Transverse colon (tissue), 4 donors: ENCODE measurements at regions of chr4 and their contacts with region 1.

Region 1: DNA sequence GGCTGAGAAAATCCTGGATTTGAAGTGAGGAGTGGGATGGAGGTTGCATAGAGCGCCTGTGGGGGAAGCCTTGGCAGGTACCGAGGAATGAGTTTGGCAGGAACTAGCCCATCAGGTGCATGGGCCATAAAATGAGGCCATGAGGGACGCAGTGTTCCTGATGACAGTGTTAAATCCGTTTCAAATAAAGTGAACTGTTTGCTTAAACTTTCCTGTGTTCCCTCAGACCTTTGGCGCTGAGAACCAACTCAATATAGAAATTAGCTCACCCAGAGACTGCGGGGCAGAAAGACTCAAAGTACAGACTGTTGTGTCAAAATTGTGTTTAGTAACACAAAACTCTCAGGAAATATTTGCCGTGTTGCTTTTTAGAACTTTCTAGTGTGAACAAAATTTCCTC is 250.0 kb upstream of the NR3C2 start:
- DNase-seq: peak; percentile 63
- H3K4me3 ChIP-seq: no peak overlapping the region
- H3K27ac ChIP-seq: peak overlapping the region; percentile 66 to 74 (median 70)
- H3K4me1 ChIP-seq: peaks cover 0 to 45% (median 28%) of the 10 kb centered on the region in 4 donors
- H3K27me3 ChIP-seq: no peaks in the 10 kb centered on the region
- CTCF ChIP-seq: no peak
- EP300 ChIP-seq: peak; percentile 86
- POLR2A ChIP-seq: no peak

Region 2: GRCh38 chr4:148166132-148166591 is 526.1 kb before region 1 on chr4:
- in situ Hi-C with region 1: loop called in 1 of 4 experiments (anchors 25 kb)
- intact Hi-C with region 1: no loop called
- DNase-seq: no peak
- H3K4me3 ChIP-seq: no peak overlapping the region
- H3K27ac ChIP-seq: peak overlapping the region; percentile 15 to 41 (median 26)
- H3K4me1 ChIP-seq: peaks cover 9 to 60% (median 25%) of the 10 kb centered on the region in 4 donors
- H3K27me3 ChIP-seq: no peaks in the 10 kb centered on the region
- CTCF ChIP-seq: no peak
- EP300 ChIP-seq: no peak
- POLR2A ChIP-seq: no peak

Region 3: DNA sequence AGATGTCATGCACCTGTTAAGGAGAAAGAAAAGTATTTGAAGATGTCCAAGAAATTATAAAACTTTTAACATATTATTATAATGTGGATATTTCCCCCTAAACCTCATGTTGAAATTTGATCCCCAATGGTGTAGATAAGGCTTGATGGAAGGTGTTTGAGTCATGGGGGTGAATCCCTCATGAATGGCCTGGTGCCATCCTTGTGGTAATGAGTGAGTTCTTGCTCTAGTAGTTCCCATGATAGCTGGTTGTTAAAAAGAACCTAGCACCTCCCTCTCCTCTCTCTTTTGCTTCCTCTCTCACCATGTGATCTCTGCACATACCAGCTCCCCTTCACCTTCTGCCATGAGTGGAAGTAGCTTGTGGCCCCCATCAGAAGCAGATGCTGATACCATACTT is 73.4 kb before region 1 on chr4:
- in situ Hi-C with region 1: no loop called
- intact Hi-C with region 1: no loop called
- DNase-seq: no peak
- H3K4me3 ChIP-seq: no peak overlapping the region
- H3K27ac ChIP-seq: no peak overlapping the region
- H3K4me1 ChIP-seq: no peaks in the 10 kb centered on the region
- H3K27me3 ChIP-seq: no peaks in the 10 kb centered on the region
- CTCF ChIP-seq: no peak
- EP300 ChIP-seq: no peak
- POLR2A ChIP-seq: no peak

Region 4: DNA sequence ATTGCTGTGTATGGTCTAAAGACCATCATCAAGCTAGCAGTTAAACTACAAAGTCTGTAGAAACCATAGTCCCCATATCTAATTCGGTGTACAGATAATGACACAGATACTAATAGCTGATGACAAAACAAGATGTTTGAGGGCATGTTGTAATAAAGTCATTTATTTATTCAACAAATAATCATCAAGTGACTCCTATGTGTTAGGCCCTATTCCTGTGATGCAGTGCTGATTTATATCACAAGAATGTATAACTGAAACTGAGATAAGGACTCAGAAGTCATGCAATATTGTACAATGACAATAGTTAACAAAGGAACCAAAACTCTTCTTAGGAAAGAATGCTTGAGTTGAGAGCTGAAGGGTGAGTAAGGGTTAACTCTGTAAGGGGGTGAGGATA is 64.9 kb after region 1 on chr4:
- in situ Hi-C with region 1: no loop called
- intact Hi-C with region 1: no loop called
- DNase-seq: no peak
- H3K4me3 ChIP-seq: no peak overlapping the region
- H3K27ac ChIP-seq: no peak overlapping the region
- H3K4me1 ChIP-seq: no peaks in the 10 kb centered on the region
- H3K27me3 ChIP-seq: no peaks in the 10 kb centered on the region
- CTCF ChIP-seq: no peak
- EP300 ChIP-seq: no peak
- POLR2A ChIP-seq: no peak